PC-3 (cell line): ENCODE measurements at regions of chr2 and their contacts with region 1.

Region 1: DNA sequence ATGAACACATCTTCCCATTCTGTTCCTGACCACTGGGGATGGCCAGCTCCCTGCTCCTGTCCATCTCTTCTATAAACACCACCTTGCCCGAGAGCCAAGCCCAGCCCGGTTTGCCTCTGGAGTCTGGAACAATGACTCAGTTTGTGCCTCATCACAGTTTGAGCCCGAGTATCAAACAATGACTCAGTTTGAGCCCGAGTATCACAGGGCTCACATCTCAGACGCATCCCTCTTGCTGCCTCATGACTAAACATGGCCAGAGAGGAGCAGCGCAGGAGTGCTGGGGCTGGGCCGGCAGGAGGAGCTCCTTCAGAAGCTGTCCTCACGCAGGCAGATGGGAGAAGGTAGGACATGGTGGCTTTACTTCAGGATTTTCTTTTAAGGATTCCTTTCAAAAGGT is 68.7 kb downstream of the PXDN start:
- DNase-seq: peak; percentile 98
- ATAC-seq: peak; percentile 99
- H3K4me3 ChIP-seq: no peak overlapping the region
- H3K27ac ChIP-seq: peak overlapping the region; percentile 84
- H3K4me1 ChIP-seq: peaks cover 24% of the 10 kb centered on the region
- H3K27me3 ChIP-seq: no peaks in the 10 kb centered on the region
- CTCF ChIP-seq: peak; percentile 85

Region 2: GRCh38 chr2:1591978-1592907 is 83.4 kb before region 1 on chr2:
- CTCF ChIA-PET with region 1: interaction called, 3 read pairs
- POLR2A ChIA-PET with region 1: no interaction called
- intact Hi-C with region 1: loop called (anchors 1 kb)
- DNase-seq: peak; percentile 90
- ATAC-seq: peak; percentile 65
- H3K4me3 ChIP-seq: peak overlapping the region; percentile 60
- H3K27ac ChIP-seq: peak overlapping the region; percentile 89
- H3K4me1 ChIP-seq: peaks cover 53% of the 10 kb centered on the region
- H3K27me3 ChIP-seq: no peaks in the 10 kb centered on the region
- CTCF ChIP-seq: peak; percentile 87

Region 3: DNA sequence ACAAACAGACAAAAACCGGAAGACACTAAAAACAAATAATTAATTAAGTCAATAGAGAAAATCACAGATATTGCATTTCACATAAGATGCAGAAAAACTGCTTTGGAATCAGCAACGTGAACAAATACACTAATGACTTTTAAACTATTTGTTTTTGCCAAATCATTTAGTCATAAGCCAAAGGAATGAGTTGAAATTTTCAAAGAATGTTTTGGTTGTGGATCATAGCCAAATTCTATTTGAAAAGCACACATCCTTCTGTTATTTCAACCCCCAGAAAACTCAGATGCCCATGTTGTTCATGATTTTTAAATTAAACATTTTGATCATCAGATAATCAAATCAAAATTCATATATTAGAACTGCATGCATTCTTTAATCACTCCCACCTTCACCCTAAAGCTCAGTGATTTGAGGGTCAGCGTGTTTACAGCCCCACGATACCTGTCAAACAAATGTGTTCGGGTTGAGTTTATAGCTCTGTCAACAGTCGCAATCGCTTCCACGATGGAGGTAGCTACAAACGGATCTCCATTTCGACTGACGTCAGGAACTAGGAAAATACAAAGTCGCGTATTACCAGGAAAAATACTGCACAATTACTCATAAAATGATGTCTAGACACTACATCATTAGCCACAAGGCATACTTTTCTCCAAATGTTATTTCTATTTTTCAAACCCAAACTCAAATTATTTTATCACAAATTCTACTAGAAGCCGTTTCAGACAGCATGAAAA is 21.5 kb before region 1 on chr2:
- CTCF ChIA-PET with region 1: no interaction called
- POLR2A ChIA-PET with region 1: no interaction called
- intact Hi-C with region 1: loop called (anchors 1 kb)
- DNase-seq: peak; percentile 62
- ATAC-seq: peak; percentile 16
- H3K4me3 ChIP-seq: no peak overlapping the region
- H3K27ac ChIP-seq: peak overlapping the region; percentile 40
- H3K4me1 ChIP-seq: peaks cover 28% of the 10 kb centered on the region
- H3K27me3 ChIP-seq: no peaks in the 10 kb centered on the region
- CTCF ChIP-seq: no peak

Region 4: GRCh38 chr2:1742681-1743395 is 67.2 kb after region 1 on chr2:
- CTCF ChIA-PET with region 1: interaction called, 6 read pairs
- POLR2A ChIA-PET with region 1: interaction called, 4 read pairs
- intact Hi-C with region 1: loop called (anchors 1 kb)
- DNase-seq: peak; percentile 91
- ATAC-seq: peak; percentile 62
- H3K4me3 ChIP-seq: peak overlapping the region; percentile 75
- H3K27ac ChIP-seq: peak overlapping the region; percentile 98
- H3K4me1 ChIP-seq: peaks cover 50% of the 10 kb centered on the region
- H3K27me3 ChIP-seq: no peaks in the 10 kb centered on the region
- CTCF ChIP-seq: peak; percentile 76

Region 5: GRCh38 chr2:1769703-1770422 is 94.2 kb after region 1 on chr2:
- CTCF ChIA-PET with region 1: interaction called, 11 read pairs
- POLR2A ChIA-PET with region 1: no interaction called
- intact Hi-C with region 1: no loop called
- DNase-seq: peak; percentile 91
- ATAC-seq: peak; percentile 99
- H3K4me3 ChIP-seq: no peak overlapping the region
- H3K27ac ChIP-seq: no peak overlapping the region
- H3K4me1 ChIP-seq: no peaks in the 10 kb centered on the region; the same call in 1 of the 2 replicates
- H3K27me3 ChIP-seq: no peaks in the 10 kb centered on the region
- CTCF ChIP-seq: peak; percentile 97